Heart left ventricle (tissue), 16 donors: ENCODE measurements at regions of chr15 and their contacts with region 1.

Region 1: DNA sequence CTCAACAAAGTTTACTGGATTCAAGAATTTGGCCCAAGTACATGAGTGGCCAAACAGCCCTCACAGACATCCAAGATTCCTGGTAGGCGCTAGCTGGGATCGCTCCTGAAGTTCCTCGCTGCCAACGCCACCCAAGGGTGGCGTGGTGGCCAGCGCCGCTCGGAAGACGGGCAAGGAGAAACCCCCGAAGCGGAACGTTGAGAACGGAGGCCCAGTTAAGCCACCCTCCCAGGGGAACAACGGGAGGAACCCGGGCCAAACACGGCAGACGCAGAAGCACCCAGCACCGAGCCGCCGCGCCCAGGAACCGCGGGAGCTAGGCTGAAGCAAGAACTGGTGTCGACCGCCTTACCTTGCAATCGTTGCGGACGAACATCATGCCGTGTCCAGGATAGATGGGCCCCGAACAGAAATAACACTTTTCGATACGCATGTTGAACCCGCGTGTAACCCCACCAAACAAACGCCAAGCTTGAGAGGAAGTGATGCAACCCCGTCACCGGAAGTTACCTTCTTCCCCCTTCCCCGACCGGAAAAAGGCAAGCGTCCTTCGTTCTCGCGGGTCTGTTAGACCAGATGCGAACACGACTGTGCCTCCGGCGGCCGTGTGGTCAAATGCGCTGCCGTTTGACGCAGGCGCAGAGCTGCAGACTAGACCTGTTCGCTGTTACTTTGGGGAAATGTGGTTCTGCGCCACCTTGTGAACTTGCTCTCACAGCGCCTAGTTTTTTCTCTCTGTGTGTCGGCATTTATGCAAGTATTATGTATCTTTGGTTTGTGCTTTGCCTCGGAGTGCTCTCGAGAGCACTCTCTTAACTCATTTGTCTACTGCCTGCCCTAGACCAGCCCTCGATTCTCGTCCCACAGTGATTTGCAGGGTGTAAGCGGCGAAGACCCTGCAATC is at the start of gene RSL24D1:
- DNase-seq: peak; percentile 96 to 98 (median 96)
- ATAC-seq: peak; percentile 99 to 100 (median 100)
- H3K4me3 ChIP-seq: peak within 1 kb of the TSS; percentile 63 to 97 (median 80)
- H3K27ac ChIP-seq: peak within 1 kb of the TSS; percentile 78 to 93 (median 90)
- H3K4me1 ChIP-seq: peaks cover 0 to 43% (median 26%) of the 10 kb centered on the region in 12 donors
- H3K27me3 ChIP-seq: no peaks in the 10 kb centered on the region
- CTCF ChIP-seq: peak in 10 of 12 donors; percentile 13 to 63 (median 44)
- POLR2A ChIP-seq: peak in 1 of 2 donors; percentile 76
- total RNA-seq, gene RSL24D1: 25.5 to 51.5 (median 39.2) TPM

Region 2: DNA sequence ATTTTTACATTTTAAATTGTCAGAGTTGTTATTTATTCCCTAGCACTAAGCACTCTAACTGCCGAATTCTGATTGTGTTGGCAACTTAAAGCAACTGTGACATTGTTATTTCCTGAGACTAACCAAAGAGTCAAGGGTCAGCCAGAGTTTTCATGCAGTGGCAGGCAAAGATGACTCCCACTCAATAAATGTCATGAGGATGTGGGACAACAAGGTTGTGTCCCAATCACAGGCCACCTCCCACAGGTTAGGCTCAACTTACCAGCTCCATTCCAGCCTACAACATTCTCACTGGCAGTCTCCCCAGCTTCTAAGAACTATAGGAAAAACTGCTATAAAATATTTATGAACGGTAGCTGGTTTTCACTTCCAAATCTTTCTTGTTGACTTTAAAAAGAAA is 80.1 kb before region 1 on chr15:
- intact Hi-C with region 1: no loop called
- DNase-seq: no peak
- ATAC-seq: no peak
- H3K4me3 ChIP-seq: no peak overlapping the region
- H3K27ac ChIP-seq: no peak overlapping the region
- H3K4me1 ChIP-seq: no peaks in the 10 kb centered on the region
- H3K27me3 ChIP-seq: no peaks in the 10 kb centered on the region
- CTCF ChIP-seq: no peak
- POLR2A ChIP-seq: no peak

Region 3: DNA sequence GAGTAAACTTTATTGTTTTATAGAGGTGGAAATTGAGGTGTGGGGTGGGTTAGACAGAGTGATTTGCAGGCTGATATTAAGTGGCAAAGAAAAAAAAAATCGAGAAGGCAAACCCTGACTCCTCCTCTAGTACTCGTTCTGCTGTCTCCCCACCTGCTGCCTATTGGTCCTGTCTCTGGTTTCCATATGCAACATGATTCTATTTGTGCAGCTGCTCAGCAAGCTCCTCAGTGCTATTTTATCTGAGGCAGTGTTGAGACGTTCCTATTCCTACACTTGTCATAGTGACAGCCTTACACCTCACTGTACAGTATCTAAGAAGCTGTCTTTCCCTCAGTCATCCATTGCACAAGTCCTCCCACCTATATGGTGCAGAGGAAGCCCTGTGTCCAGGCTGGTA is 45.1 kb before region 1 on chr15:
- intact Hi-C with region 1: no loop called
- DNase-seq: no peak
- ATAC-seq: no peak
- H3K4me3 ChIP-seq: no peak overlapping the region
- H3K27ac ChIP-seq: no peak overlapping the region
- H3K4me1 ChIP-seq: no peaks in the 10 kb centered on the region
- H3K27me3 ChIP-seq: no peaks in the 10 kb centered on the region
- CTCF ChIP-seq: no peak
- POLR2A ChIP-seq: no peak

Region 4: GRCh38 chr15:55290528-55291057 is 93.9 kb after region 1 on chr15:
- intact Hi-C with region 1: loop called in 1 of 10 experiments (anchors 1 kb)
- DNase-seq: peak; percentile 80 to 92 (median 82)
- ATAC-seq: peak; percentile 86 to 95 (median 94)
- H3K4me3 ChIP-seq: peak overlapping the region; percentile 73 to 94 (median 84)
- H3K27ac ChIP-seq: peak overlapping the region; percentile 72 to 96 (median 87)
- H3K4me1 ChIP-seq: peaks cover 0 to 31% (median 3%) of the 10 kb centered on the region in 12 donors
- H3K27me3 ChIP-seq: no peaks in the 10 kb centered on the region
- CTCF ChIP-seq: peak; percentile 73 to 96 (median 89)
- POLR2A ChIP-seq: no peak